Dendritic cell treated with granulocyte-macrophage colony-stimulating factor and Interleukin-4, amounts not matched to agents 40 ng/mL and 50 ng/mL, for 4 days (primary cell): ENCODE measurements at regions of chr1 and their contacts with region 1.

Region 1: DNA sequence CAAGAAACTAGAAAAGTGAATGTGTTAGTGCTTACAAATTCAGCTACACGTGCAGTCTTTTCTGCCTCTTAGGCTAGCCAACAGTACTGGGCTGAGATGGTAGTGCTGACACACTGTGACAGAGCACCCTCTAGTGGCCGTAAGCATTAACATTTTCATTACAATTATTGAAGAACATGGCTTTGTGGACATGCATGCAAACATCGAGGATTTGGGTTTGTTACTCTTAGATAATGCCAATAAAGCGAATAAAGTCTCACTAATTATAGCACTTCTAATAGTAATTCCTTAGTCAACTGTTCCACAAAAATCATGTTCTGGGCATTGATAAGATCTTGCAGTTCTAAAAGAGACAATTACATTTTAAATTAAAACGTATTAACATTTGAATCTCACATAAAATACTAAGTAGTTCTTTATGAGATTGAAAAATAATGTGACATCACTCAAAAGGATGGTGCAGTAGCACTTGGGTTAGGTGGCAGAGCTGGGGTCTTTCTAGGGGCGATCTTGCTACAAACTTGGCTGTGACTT is 47.1 kb downstream of the MYSM1 start:
- H3K4me3 Mint-ChIP-seq: no peak overlapping the region
- H3K27ac Mint-ChIP-seq: no peak overlapping the region
- H3K4me1 Mint-ChIP-seq: peaks cover 11% of the 10 kb centered on the region
- H3K27me3 Mint-ChIP-seq: peaks cover 1% of the 10 kb centered on the region

Region 2: GRCh38 chr1:58528518-58528917 is 124.2 kb before region 1 on chr1:
- intact Hi-C with region 1: no loop called
- H3K4me3 Mint-ChIP-seq: no peak overlapping the region
- H3K27ac Mint-ChIP-seq: no peak overlapping the region
- H3K4me1 Mint-ChIP-seq: peaks cover 4% of the 10 kb centered on the region
- H3K27me3 Mint-ChIP-seq: no peaks in the 10 kb centered on the region

Region 3: DNA sequence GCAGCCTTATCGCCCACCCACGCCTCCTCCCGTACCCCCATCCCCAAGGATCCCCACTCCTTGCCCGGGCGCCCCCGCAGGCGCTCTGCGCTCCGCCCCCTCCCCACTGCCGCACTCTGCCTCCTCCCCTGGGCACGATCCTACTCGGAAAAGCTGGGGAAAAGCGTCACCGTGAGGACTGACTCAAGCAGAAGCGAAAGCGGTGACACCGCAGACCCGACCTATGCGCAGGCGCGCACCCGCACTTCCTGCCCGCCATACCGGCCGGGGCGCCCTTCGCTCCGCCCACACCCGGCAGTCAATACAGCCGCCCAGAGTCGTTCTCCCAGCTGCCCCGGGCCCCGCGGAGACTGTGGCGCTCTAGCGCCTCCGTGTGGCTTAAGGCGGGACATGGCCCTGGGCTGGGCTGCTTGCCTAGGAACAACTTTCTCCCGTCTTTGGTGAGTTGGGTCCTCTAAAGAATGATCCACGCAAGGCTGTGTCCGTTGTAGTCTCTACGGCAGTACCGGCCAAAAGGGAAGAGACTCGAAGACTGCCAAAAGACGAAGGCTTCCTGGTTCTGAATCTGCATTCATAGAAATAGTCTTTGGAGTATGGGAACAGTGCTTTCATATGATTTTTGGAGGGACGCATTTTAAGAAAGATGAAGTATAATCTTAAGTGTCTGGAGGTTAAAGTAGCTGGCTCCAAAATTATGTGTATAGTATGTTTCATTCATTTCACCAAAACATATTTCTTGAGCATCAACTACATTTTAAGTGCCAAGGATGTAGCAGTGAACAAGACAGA is 106.0 kb before region 1 on chr1 and contains the start of gene OMA1:
- intact Hi-C with region 1: loop called (anchors 1 kb)
- H3K4me3 Mint-ChIP-seq: peak within 1 kb of the TSS; percentile 79
- H3K27ac Mint-ChIP-seq: peak within 1 kb of the TSS; percentile 93
- H3K4me1 Mint-ChIP-seq: peaks cover 19% of the 10 kb centered on the region
- H3K27me3 Mint-ChIP-seq: no peaks in the 10 kb centered on the region